Right ventricle myocardium inferior (tissue), 1 donor: ENCODE measurements at regions of chrX and their contacts with region 1.

Region 1: DNA sequence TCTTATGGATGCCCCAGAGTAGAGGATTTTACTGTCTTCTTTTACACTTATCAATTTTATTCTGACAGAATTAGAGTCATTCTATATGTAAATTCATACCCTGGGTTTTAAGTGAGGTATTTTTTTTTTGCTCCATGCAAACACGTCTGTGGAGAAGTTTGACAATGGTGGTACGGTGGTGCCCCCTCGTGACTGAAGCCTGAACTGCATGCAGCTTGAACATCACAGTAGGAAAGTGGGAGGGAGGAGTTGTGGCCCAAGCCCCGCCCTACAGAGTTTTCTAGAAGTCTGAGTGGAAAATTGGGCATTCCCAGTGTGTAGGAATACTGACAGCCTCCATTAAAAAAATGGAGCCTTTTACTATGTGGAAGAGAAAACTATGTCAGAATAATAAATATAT is 73.3 kb upstream of the RAB40AL start:
- DNase-seq: peak; percentile 79
- ATAC-seq: peak; percentile 60

Region 2: GRCh38 chrX:102515975-102516941 is 347.5 kb before region 1 on chrX and contains the start of gene TMSB15A:
- intact Hi-C with region 1: loop called (anchors 10 kb)
- DNase-seq: peak; percentile 72
- ATAC-seq: peak; percentile 95
- total RNA-seq, gene TMSB15A: 0.62 TPM

Region 3: DNA sequence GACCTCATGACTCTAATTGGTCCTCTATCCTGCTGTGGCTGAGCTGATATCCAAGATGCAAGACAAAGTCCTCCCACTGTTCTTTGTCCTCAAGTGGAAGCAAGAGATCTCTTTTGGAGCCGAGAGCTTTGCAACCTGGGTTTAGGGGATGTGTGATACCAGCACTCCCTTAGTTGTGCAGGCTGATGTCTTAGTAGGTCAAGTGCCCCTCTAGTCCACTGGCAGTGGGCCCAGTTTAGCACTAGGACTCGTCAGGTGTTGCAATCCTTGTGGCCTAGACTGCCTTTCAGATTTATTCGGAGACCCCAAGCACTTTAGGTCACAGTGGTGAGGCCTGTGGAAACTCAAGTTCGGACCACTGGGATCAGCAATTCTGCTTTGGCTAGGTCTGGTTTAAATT is 79.2 kb before region 1 on chrX:
- intact Hi-C with region 1: no loop called
- DNase-seq: peak; percentile 37
- ATAC-seq: no peak